ENCODE measurements at regions of chr6 and their contacts with region 1.

Region 1: GRCh38 chr6:85323435-85324040 is 126.3 kb upstream of the NT5E start:
- DNase-seq: peak; percentile 87
- ATAC-seq: peak; percentile 84
- H3K4me3 ChIP-seq: no peak overlapping the region
- H3K27ac ChIP-seq: no peak overlapping the region
- H3K4me1 ChIP-seq: no peaks in the 10 kb centered on the region
- H3K27me3 ChIP-seq: no peaks in the 10 kb centered on the region
- CTCF ChIP-seq: peak; percentile 93

Region 2: DNA sequence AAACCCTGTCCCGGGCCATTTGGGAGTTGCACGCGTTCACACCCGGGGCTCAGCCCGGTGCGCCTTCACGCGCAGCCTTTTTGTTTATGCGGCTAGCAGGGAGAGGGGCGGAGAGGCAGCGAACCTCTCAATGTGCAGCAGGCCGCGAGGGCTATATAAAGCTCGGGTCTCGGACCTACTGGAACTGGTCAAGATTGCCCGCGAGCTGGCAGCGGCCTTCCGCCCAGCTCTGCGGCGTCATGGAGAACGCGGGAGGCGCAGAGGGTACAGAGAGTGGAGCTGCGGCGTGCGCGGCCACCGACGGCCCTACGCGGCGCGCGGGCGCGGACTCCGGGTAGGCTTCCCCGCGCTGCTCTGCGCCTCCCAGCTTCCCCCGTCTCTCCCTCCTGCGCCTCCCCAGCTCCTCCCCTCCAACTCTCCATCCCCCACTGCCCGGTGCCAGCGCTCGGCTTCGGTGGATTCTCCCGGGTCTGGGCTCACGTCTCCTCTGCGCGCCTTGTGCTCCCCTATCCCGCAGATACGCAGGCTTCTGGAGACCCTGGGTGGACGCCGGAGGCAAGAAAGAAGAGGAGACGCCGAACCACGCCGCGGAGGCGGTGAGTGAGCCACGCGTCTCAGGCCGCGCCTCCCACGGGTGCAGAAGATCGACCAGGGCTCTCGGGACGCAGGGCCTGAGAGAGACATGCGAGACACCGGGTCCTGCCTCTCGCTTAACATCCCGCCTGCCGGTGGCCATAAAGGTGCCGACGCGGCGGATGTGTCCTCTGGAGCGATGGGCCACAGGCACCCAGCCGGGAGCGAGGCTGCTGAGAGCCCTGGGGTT is 1470.1 kb before region 1 on chr6 and contains the start of gene RIPPLY2:
- CTCF ChIA-PET with region 1: no interaction called
- POLR2A ChIA-PET with region 1: no interaction called
- intact Hi-C with region 1: no loop called
- DNase-seq: no peak
- ATAC-seq: no peak
- H3K4me3 ChIP-seq: no peak within 1 kb of the TSS
- H3K27ac ChIP-seq: no peak within 1 kb of the TSS
- H3K4me1 ChIP-seq: peaks cover 8% of the 10 kb centered on the region
- H3K27me3 ChIP-seq: peaks cover 12% of the 10 kb centered on the region; the same call in 1 of the 2 replicates
- CTCF ChIP-seq: no peak
- total RNA-seq, gene RIPPLY2: not detected in 2 replicates

Region 3: GRCh38 chr6:85015396-85015990 is 308.0 kb before region 1 on chr6:
- CTCF ChIA-PET with region 1: no interaction called
- POLR2A ChIA-PET with region 1: no interaction called
- intact Hi-C with region 1: loop called (anchors 2 kb)
- DNase-seq: peak; percentile 63
- ATAC-seq: peak; percentile 72
- H3K4me3 ChIP-seq: no peak overlapping the region
- H3K27ac ChIP-seq: no peak overlapping the region
- H3K4me1 ChIP-seq: no peaks in the 10 kb centered on the region
- H3K27me3 ChIP-seq: peaks cover 22% of the 10 kb centered on the region; the same call in 1 of the 2 replicates
- CTCF ChIP-seq: peak; percentile 75

Region 4: DNA sequence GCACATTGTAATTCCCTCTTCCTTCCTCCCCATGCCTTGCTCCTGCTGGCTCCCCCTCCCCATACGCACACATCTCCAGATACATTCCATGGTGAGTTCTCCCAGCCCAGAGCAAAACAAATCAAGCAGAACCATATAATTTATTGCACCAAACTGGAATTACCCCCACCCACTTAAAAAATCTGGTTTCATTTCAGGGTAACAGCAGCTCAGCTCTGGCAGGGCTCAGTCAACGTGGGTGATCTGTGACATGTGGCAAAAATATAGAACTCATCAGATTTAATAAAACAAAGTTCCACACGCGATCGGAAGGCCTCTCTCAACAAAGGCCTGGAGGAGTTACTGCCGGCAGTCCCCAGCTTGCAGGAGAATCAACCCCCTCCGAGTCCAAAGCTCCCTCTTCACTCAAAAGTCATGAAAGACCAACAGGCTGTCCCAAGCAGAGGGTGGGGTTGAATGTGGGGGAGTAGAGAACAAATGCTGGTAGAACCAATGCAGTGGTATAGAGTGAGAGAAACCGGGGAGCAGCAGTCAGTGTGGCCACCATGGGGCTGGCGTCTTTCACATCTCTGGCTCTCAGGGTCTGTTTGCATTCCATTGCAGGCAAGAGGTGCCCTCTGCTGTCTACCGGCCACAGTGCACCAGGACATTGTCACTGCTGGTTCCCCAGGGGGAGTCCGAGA is 196.9 kb before region 1 on chr6:
- CTCF ChIA-PET with region 1: no interaction called
- POLR2A ChIA-PET with region 1: no interaction called
- intact Hi-C with region 1: loop called (anchors 5 kb)
- DNase-seq: peak; percentile 67
- ATAC-seq: peak; percentile 94
- H3K4me3 ChIP-seq: no peak overlapping the region
- H3K27ac ChIP-seq: no peak overlapping the region
- H3K4me1 ChIP-seq: no peaks in the 10 kb centered on the region
- H3K27me3 ChIP-seq: peaks cover 20% of the 10 kb centered on the region
- CTCF ChIP-seq: peak; percentile 78

Region 5: GRCh38 chr6:85261271-85261670 is 62.3 kb before region 1 on chr6:
- CTCF ChIA-PET with region 1: no interaction called
- POLR2A ChIA-PET with region 1: no interaction called
- intact Hi-C with region 1: no loop called
- DNase-seq: no peak
- ATAC-seq: no peak
- H3K4me3 ChIP-seq: no peak overlapping the region
- H3K27ac ChIP-seq: no peak overlapping the region
- H3K4me1 ChIP-seq: no peaks in the 10 kb centered on the region
- H3K27me3 ChIP-seq: no peaks in the 10 kb centered on the region
- CTCF ChIP-seq: no peak

Region 6: GRCh38 chr6:85404502-85405174 is 81.1 kb after region 1 on chr6:
- CTCF ChIA-PET with region 1: no interaction called
- POLR2A ChIA-PET with region 1: no interaction called
- intact Hi-C with region 1: no loop called
- DNase-seq: peak; percentile 94
- ATAC-seq: peak; percentile 74
- H3K4me3 ChIP-seq: peak overlapping the region; percentile 45; the same call in 1 of the 2 replicates
- H3K27ac ChIP-seq: peak overlapping the region; percentile 95
- H3K4me1 ChIP-seq: peaks cover 48% of the 10 kb centered on the region
- H3K27me3 ChIP-seq: no peaks in the 10 kb centered on the region
- CTCF ChIP-seq: no peak

Region 7: GRCh38 chr6:85551264-85551663 is 227.7 kb after region 1 on chr6:
- CTCF ChIA-PET with region 1: no interaction called
- POLR2A ChIA-PET with region 1: no interaction called
- intact Hi-C with region 1: no loop called
- DNase-seq: peak; percentile 3
- ATAC-seq: no peak
- H3K4me3 ChIP-seq: no peak overlapping the region
- H3K27ac ChIP-seq: no peak overlapping the region
- H3K4me1 ChIP-seq: no peaks in the 10 kb centered on the region
- H3K27me3 ChIP-seq: no peaks in the 10 kb centered on the region
- CTCF ChIP-seq: no peak